Mammary epithelial cell (primary cell): ENCODE measurements at regions of chr12 and their contacts with region 1.

Region 1: GRCh38 chr12:3885277-3886094 is 12.3 kb upstream of the PARP11 start:
- DNase-seq: peak; percentile 22
- H3K4me3 ChIP-seq: peak overlapping the region in 1 of 3 experiments; percentile 11
- H3K27ac ChIP-seq: no peak overlapping the region
- H3K4me1 ChIP-seq: peaks cover 5% of the 10 kb centered on the region
- H3K27me3 ChIP-seq: peaks cover 3% of the 10 kb centered on the region
- CTCF ChIP-seq: peak; percentile 69 to 81

Region 2: DNA sequence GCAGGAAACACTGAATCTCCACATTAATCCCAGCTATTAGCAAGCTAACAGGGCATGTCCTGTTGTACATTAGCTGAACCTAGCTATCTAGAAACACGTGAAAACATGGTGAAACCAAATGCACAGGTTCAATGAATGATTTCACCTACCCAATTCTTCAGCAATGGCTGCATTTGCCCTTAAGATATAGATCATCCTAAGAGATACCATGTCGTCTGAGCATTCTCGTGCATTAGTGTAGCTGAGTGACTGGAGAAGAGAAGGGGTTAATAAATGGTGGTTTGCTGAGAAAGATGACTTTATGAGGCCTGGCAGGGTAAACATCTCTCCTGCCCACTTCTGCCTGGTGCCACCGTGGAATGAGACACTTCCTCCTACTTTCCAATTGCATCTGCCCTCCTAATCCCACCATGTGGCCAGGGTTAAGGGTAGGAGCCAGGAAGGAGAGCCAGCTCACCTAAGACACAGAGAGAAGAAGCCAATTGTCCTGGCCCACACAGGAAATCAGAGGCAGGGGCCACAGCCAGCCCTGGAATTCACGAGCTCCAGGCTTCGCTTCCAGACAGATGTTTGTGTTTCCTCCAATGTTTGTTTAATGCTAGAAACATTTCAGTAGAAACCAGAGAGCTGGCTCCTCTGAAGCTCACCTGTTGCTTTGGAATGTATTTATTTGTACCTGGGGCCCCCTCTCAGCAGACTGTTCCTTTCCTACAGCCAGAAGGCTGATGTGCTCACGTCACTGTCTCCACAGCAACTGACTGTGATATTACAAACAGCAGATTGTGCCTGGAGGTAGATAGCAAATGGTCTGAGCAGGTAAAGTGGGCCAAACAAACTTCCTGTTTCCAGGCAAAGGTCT is 113.7 kb after region 1 on chr12:
- CTCF ChIA-PET with region 1: no interaction called
- dilution Hi-C with region 1: no loop called
- in situ Hi-C with region 1: no loop called
- intact Hi-C with region 1: loop called (anchors 1 kb)
- DNase-seq: peak; percentile 96
- H3K4me3 ChIP-seq: no peak overlapping the region
- H3K27ac ChIP-seq: peak overlapping the region; percentile 90
- H3K4me1 ChIP-seq: peaks cover 34% of the 10 kb centered on the region
- H3K27me3 ChIP-seq: no peaks in the 10 kb centered on the region
- CTCF ChIP-seq: no peak

Region 3: GRCh38 chr12:4037747-4038312 is 152.3 kb after region 1 on chr12:
- CTCF ChIA-PET with region 1: interaction called, 6 read pairs
- dilution Hi-C with region 1: loop called (anchors 5 kb)
- in situ Hi-C with region 1: loop called (anchors 5 to 25 kb)
- intact Hi-C with region 1: loop called (anchors 1 kb)
- DNase-seq: peak; percentile 47
- H3K4me3 ChIP-seq: no peak overlapping the region
- H3K27ac ChIP-seq: no peak overlapping the region
- H3K4me1 ChIP-seq: peaks cover 19% of the 10 kb centered on the region
- H3K27me3 ChIP-seq: no peaks in the 10 kb centered on the region
- CTCF ChIP-seq: peak; percentile 75 to 79

Region 4: DNA sequence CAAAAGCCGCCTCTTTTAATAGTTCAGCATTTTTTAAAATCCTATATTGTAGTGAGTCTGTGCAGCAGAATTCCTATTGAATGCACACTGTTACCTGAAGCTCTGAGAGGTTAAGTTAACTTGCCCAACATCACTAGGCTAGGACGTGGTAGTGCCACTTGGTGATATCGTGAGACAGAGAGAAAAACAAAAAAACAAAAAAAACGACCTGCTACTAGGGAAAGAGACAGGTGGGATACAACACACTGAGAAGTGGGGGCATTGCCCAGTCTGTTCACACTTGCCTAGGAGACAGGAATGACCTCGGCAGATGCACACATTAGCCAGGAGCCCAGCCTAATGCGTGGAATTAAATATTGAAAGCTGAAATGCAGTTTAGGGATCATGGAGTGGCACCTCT is 258.4 kb after region 1 on chr12:
- CTCF ChIA-PET with region 1: no interaction called
- dilution Hi-C with region 1: no loop called
- in situ Hi-C with region 1: no loop called
- intact Hi-C with region 1: loop called (anchors 2 kb)
- DNase-seq: peak; percentile 43
- H3K4me3 ChIP-seq: no peak overlapping the region
- H3K27ac ChIP-seq: no peak overlapping the region
- H3K4me1 ChIP-seq: peaks cover 18% of the 10 kb centered on the region
- H3K27me3 ChIP-seq: no peaks in the 10 kb centered on the region
- CTCF ChIP-seq: peak in 1 of 2 donors; percentile 18

Region 5: GRCh38 chr12:4526923-4527546 is 641.5 kb after region 1 on chr12:
- CTCF ChIA-PET with region 1: no interaction called
- dilution Hi-C with region 1: no loop called
- in situ Hi-C with region 1: loop called in 1 of 2 experiments (anchors 25 kb)
- intact Hi-C with region 1: loop called (anchors 5 kb)
- DNase-seq: no peak
- H3K4me3 ChIP-seq: no peak overlapping the region
- H3K27ac ChIP-seq: no peak overlapping the region
- H3K4me1 ChIP-seq: no peaks in the 10 kb centered on the region
- H3K27me3 ChIP-seq: no peaks in the 10 kb centered on the region
- CTCF ChIP-seq: peak; percentile 45 to 52